T-cell (primary cell): ENCODE measurements at regions of chr6 and their contacts with region 1.

Region 1: GRCh38 chr6:33215271-33216116 is 7.2 kb downstream of the RING1 start:
- DNase-seq: no peak
- ATAC-seq: peak in 2 of 4 experiments; percentile 11 to 23
- H3K4me3 ChIP-seq: no peak overlapping the region
- H3K4me3 Mint-ChIP-seq: peak overlapping the region in 1 of 3 donors; percentile 85
- H3K27ac ChIP-seq: no peak overlapping the region
- H3K27ac Mint-ChIP-seq: peak overlapping the region in 1 of 2 donors; percentile 74
- H3K4me1 ChIP-seq: peaks cover 2 to 29% of the 10 kb centered on the region in 2 experiments
- H3K4me1 Mint-ChIP-seq: peaks cover 19 to 26% (median 22%) of the 10 kb centered on the region in 3 donors
- H3K27me3 ChIP-seq: peaks cover 2 to 66% of the 10 kb centered on the region in 2 experiments
- H3K27me3 Mint-ChIP-seq: peaks cover 23 to 50% of the 10 kb centered on the region in 2 donors

Region 2: GRCh38 chr6:32993363-32993973 is 222.0 kb before region 1 on chr6:
- CTCF ChIA-PET with region 1: no interaction called
- POLR2A ChIA-PET with region 1: interaction called in 1 of 2 experiments, 11 read pairs
- DNase-seq: no peak
- ATAC-seq: no peak
- H3K4me3 ChIP-seq: no peak overlapping the region
- H3K4me3 Mint-ChIP-seq: no peak overlapping the region
- H3K27ac ChIP-seq: no peak overlapping the region
- H3K27ac Mint-ChIP-seq: no peak overlapping the region
- H3K4me1 ChIP-seq: no peaks in the 10 kb centered on the region
- H3K4me1 Mint-ChIP-seq: no peaks in the 10 kb centered on the region
- H3K27me3 ChIP-seq: peaks cover 0 to 8% of the 10 kb centered on the region in 2 experiments
- H3K27me3 Mint-ChIP-seq: peaks cover 3 to 7% of the 10 kb centered on the region in 2 donors